ENCODE measurements at regions of chr21 and their contacts with region 1.

Region 1: DNA sequence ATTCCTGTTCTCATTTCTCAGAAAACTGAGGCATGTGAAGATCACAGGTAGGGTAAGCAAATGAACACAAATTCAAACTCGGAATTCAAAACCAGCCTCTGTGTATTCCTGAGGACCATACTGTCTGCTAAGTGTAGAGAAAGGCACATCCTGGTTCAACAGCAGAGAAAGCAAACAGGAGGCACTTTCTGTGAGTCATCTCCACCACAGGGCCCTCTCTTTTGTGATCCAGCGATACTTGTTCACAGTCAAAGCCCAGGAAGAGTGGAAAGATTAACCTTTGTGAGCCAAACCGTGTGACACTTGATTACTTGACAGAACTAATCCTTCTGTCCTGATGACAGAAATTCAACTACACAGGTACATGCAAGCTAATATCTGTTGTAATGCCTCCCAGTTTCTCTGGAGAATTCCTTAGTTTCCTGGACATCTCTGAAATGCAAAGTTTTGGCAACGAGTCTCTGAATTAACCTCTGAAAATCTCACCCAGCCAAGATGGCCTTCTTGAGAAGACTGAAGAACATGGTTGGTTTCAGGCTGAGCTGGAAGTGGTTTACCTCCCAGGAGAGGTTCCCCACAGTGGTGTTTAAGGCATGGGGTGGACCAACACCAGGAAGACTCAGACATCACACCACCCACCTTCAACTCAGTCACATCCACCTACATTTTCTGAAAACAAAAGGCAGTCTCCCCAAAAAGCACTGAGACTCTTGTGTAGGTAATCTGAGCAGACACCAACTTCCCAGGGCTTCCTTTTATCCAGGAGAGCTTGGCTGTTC is 98.2 kb upstream of the ERG start:
- DNase-seq: no peak
- ATAC-seq: no peak
- H3K4me3 ChIP-seq: no peak overlapping the region
- H3K27ac ChIP-seq: no peak overlapping the region
- H3K4me1 ChIP-seq: no peaks in the 10 kb centered on the region
- H3K27me3 ChIP-seq: peaks cover 0 to 9% (median 0%) of the 10 kb centered on the region in 9 donors
- CTCF ChIP-seq: no peak
- POLR2A ChIP-seq: no peak

Region 2: GRCh38 chr21:38645282-38645681 is 48.8 kb after region 1 on chr21:
- intact Hi-C with region 1: loop called in 1 of 10 experiments (anchors 5 kb)
- DNase-seq: no peak
- ATAC-seq: no peak
- H3K4me3 ChIP-seq: no peak overlapping the region
- H3K27ac ChIP-seq: no peak overlapping the region
- H3K4me1 ChIP-seq: no peaks in the 10 kb centered on the region
- H3K27me3 ChIP-seq: peaks cover 0 to 19% (median 0%) of the 10 kb centered on the region in 9 donors
- CTCF ChIP-seq: no peak
- POLR2A ChIP-seq: no peak

Measured in heart left ventricle (tissue), 16 donors.